Astrocyte of the cerebellum (primary cell): ENCODE measurements at regions of chr3 and their contacts with region 1.

Region 1: DNA sequence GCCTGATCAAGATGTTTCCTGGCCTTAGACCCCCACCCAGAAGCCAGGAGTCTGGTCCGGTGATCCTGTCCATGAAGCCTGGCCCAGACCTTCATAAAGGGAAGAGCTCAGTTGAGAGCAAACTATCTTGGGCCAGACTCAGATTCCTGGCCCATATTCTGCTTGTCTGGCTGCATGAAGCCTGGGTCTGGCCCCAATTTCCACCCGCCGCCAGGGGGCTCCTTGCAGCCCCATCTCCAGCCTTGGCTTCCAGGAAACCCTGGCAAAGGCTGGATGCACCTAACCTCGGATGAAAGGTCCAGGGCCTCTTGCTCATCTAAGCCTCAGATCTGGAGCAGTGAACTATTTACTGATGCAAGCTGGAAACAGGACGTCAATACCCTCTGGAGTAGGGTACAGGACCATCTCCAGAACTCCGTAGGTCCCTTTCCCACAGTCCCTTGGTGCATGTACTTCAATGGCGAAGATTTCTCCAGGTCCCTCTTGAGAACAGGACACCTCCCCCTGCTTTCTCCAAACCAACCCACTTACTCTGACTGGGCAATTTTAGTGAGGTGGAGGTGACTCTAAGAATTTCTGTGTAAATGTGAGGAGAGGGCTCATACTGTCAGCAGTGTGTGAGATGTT is 5.6 kb downstream of the FOXL2 start:
- DNase-seq: no peak
- H3K4me3 ChIP-seq: no peak overlapping the region
- CTCF ChIP-seq: peak; percentile 63

Region 2: DNA sequence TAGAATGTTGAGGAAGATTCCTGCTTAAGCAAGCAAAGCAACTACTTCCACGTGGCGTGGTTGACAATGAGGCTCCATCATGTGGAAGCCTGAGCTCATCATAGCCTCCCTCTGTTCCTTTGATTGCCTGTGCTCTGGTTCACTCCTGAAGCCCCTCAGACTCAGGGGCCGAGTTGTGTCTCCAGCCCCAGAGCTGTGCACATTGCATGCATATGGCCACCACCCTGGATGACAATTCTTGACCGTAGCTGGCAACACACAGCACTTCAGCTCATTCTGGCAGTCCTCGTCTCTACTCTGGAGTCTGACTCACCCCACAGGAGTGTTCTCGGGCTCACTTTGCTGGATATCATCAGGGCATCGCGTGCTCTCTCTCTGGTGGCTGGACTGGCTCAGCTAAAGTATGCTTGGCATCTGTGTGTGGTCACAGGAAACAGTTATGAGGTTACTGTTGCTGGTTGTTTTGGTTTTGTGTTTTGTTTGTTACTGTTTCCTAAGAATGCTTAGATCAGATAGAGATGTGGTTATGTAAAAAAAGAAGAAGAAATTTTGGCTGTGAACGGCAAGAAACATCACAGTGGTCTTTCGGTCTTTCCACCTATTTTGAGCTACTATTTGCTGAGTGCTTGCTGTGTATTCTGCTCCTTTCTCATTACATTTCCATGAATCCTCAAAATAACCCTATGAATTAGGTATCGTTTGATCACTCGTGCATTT is 360.9 kb after region 1 on chr3:
- in situ Hi-C with region 1: loop called (anchors 10 kb)
- DNase-seq: peak; percentile 99
- H3K4me3 ChIP-seq: no peak overlapping the region
- CTCF ChIP-seq: no peak